ENCODE measurements at regions of chr13 and their contacts with region 1.

Region 1: GRCh38 chr13:67273001-67273400 is 42.9 kb upstream of the PCDH9 start:
- DNase-seq: no peak
- H3K4me3 ChIP-seq: no peak overlapping the region
- H3K27ac ChIP-seq: no peak overlapping the region
- H3K4me1 ChIP-seq: no peaks in the 10 kb centered on the region
- CTCF ChIP-seq: no peak

Region 2: GRCh38 chr13:67075239-67075638 is 197.8 kb before region 1 on chr13:
- CTCF ChIA-PET with region 1: no interaction called
- POLR2A ChIA-PET with region 1: no interaction called
- intact Hi-C with region 1: no loop called
- DNase-seq: no peak
- H3K4me3 ChIP-seq: no peak overlapping the region
- H3K27ac ChIP-seq: no peak overlapping the region
- H3K4me1 ChIP-seq: no peaks in the 10 kb centered on the region
- CTCF ChIP-seq: peak; percentile 50

Region 3: GRCh38 chr13:67238277-67238859 is 34.6 kb before region 1 on chr13:
- CTCF ChIA-PET with region 1: no interaction called
- POLR2A ChIA-PET with region 1: no interaction called
- intact Hi-C with region 1: no loop called
- DNase-seq: peak; percentile 60
- H3K4me3 ChIP-seq: no peak overlapping the region
- H3K27ac ChIP-seq: no peak overlapping the region
- H3K4me1 ChIP-seq: peaks cover 6% of the 10 kb centered on the region
- CTCF ChIP-seq: peak; percentile 94

Region 4: DNA sequence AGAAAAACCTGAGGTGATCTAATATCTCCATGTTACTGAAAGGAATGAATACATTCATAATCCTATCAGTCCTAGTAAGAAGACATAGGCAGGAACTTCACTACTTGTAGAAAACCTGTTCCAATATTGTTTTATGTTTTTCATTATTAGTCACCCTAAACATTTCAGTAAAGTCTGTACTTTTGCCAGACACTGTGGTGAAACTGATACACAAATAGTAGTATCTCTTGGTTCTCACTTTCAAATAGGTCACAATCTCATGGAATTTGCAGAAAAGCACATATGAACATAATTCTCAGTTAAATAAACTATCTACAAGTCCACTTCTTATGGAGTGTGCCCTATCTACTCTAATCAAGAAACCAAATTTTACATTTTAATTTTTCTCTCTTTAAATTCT is 45.4 kb after region 1 on chr13:
- CTCF ChIA-PET with region 1: no interaction called
- POLR2A ChIA-PET with region 1: interaction called, 10 read pairs
- intact Hi-C with region 1: no loop called
- DNase-seq: no peak
- H3K4me3 ChIP-seq: no peak overlapping the region
- H3K27ac ChIP-seq: no peak overlapping the region
- H3K4me1 ChIP-seq: no peaks in the 10 kb centered on the region
- CTCF ChIP-seq: no peak

Measured in OCI-LY7 (cell line).